ENCODE measurements at regions of chr1 and their contacts with region 1.

Region 1: DNA sequence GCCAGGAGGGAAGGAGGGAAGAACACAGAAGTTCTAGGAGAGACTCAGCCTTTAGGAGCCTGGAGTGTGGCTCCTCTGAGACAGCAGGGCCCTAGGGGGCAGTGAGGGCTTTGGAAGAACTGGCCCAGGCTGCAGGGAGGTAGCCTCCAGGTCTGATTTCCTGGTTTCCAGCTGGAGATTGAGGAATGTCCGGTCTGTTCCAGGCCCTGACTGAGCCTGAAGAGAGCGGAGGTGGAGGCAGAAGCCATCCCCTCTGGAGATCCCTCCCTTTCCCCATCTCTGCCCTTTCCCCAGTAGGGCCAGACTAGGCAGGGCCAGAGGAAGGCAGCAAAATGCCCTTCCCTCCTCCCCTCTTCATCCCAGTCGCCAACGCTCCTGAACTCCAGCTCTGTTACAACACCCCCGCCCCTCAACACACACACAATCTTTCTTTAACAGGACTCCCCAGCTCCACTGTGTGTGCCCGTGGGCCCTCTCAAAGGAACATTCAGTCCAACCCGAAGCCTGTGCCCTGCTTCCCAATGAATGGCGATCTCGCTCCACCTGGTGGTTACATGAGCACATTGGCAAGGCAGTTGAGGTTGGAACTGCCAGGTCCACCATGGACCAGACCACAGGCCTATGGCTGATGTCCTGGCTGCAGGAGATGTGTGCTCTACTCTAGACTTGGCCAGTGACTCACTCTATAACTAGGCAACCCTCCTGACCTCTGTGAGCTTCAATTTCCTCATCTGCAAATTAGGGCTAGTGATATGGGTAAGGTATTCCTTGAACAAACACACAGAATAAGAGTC is 32.0 kb downstream of the MAP7D1 start:
- DNase-seq: peak; percentile 84
- CTCF ChIP-seq: peak; percentile 94

Region 2: DNA sequence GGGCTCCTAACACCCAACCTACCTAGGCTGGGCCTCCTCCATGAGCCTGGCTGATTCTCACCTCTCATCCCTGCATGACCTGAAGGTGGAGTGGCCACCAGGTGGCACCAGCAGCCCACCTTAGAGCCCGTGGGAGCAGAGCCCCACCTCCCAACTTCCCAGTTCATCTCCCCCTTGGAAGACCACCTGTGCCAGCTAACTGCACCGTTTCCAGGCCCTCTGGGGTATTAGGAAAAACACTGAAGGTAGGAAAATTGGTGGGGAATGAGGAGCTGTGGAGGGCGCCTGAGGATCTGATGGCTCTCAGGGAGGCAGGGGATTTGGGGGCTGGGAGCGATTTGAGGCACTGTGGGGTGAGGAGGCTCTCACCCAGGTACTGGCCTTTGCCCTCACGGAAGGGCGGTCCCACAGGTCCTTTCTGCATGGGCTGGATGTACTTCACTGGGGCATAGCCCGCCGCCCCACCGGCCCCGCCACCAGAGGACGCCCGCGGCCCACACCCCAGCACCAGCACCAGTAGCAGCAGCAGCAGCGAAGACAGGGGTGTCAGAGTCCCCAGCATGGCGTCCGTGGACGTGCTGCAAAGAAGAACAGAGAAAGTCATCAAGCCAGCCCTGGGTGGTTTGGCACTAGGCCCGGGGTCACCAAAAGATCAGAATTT is 88.2 kb before region 1 on chr1:
- CTCF ChIA-PET with region 1: interaction called, 53 read pairs
- POLR2A ChIA-PET with region 1: no interaction called
- DNase-seq: peak; percentile 89
- CTCF ChIP-seq: peak; percentile 88

Region 3: DNA sequence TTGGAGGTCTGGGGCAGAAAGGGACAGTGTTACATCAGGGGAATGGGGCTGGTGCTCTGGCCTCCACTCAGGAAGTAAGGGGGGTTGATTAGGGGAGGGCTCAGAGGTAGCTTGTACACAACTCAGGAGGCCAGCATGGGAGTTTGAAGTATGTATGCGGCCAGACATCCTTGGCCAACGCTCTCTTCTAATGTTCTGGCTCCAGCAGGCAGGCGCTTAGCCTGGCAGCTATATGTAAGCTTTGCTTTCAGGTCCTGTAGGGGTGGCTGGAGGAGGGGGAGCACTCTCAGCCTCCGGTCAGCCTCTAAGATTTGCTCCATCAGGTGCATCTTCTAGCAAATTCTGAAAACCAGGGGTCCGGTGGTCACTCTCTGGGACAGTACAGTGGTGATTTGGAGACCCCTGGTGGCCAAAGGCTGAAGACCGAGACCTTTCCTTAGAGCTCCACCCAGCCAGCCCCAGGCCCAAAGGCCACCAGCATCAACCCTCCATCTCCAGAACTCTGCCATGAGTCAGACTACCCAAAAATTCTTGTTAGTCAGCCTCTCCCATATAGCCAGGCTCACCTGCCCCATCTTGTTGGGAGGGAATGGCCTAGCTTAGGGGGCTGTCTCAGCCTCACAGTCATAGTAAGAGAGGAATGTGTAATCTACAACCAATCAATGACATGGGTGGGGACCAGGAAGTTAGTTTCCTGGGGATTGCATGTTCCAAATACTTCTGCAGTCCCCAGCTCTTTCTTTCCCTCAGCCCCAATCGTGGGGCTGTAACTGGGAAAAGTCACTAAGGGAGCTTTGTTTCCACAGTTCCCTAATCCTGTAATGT is 53.3 kb before region 1 on chr1:
- CTCF ChIA-PET with region 1: interaction called, 27 read pairs
- POLR2A ChIA-PET with region 1: no interaction called
- DNase-seq: peak; percentile 79
- CTCF ChIP-seq: peak; percentile 54

Region 4: DNA sequence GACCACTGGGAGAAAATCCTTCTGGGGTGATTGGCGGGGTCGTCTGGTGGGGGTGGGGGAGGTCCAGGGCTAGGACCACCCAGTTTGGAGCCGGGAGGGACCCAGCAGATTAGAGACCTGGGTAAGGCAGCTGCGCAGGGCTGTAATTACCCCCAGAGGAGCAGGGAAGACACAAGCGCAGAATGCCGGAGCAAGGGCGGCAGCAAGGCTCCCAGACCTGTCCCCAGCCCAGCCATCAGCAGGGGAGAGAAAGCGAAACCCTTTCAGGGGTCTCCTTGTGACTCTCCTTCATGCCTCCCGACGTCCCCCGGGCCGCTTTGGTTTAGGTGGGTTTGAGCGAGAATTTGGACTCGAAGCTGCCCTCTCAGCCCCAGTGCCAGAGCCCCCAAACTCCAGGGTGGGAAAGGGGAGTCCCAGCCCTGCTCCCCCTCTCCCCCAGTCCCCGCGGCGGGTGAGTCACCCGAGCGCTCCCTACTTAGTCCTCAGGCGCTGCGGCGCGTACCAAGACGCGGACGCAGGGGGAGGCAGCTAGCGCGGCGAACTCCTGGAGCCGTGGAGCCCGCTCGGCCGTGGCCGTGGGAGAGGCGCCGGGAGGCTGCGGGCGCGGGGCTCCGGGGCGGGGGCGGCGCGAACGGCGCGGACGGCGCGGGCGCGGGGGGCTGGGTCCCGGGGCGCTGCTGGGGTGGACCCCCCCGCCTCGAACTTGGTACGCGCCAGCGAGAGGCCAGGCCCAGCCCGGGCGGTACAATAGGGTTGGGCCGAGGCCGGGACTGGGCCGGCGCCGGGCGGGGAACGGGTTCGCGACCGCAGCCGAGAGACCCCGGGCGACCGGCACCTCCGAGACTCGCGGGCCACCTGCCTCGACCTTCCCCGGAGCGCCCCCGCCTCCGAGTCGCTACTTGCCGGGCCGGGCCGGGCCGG is 32.3 kb before region 1 on chr1 and contains the start of gene MAP7D1:
- CTCF ChIA-PET with region 1: interaction called, 123 read pairs
- POLR2A ChIA-PET with region 1: interaction called, 5 read pairs
- DNase-seq: peak; percentile 87
- CTCF ChIP-seq: no peak

Region 5: DNA sequence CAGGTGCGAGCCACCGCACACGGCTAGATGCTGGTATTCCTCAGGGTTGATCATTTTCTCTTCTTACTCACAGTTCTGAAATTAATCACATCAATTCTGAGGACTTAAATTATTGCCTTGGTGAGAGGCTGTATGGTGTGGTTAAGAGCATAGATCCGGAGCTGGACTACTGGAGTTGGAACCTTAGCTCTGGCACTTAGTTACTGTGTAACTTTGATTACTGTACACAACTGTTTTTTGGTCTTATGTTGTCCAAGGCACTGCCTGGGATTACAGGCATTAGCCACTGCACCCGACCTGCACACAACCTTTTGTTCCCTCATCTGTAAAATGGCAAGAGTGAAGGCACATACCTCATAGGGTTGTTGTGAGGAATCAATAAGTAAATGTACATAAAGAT is 10.6 kb after region 1 on chr1:
- CTCF ChIA-PET with region 1: interaction called, 17 read pairs
- POLR2A ChIA-PET with region 1: no interaction called
- DNase-seq: no peak
- CTCF ChIP-seq: no peak

Region 6: DNA sequence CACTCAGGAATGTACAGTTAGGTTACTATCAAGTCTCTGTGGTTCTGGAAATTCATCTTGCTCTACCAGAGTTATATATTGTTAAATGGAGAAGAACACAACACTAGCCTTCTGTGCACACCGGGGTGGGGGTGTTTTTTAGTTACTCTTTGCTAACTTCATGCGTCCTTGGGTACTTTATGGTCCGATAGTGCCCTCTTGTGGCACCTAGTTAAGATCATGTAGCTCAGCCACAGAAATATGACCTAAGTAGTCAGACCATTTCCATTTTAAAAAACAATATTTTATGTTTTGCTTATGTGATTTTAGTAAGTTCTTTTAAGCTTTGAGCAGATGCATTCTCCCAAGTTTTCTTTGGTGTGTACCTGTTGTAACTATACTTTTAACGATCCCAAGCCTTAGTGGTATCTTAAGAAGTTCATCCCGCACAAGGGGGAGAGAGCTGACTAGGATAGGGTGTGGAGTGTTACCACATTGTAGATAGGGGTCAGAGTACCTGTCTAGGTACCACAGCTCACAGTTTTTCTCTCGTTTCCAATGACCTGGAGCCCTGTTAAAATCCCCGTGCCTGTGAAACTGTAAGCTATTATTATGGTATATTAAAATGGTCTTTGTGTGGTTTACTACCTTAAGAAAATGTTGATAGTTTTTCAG is 97.6 kb after region 1 on chr1:
- CTCF ChIA-PET with region 1: interaction called, 20 read pairs
- POLR2A ChIA-PET with region 1: no interaction called
- DNase-seq: peak; percentile 71
- CTCF ChIP-seq: peak; percentile 43

Region 7: DNA sequence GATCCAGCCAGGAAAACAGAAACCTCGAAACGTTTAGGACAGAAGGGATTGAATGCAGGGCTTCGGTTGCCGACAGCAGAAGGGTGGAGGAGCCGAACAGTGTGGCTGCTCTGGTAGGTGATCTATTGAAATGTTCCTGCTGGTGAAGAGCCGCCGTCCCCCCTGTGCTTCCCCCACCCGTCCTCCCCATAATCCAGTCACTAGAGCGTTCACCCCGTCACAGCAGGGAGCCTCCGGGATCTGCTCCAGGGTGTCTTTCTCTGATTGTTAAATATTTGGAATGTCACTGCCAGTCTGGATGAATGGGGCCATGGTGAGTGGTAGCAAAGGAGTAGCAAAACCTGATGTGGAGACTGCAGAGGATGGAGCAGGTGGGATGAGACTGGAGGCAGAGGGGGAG is 549.8 kb after region 1 on chr1:
- CTCF ChIA-PET with region 1: no interaction called
- POLR2A ChIA-PET with region 1: no interaction called
- DNase-seq: no peak
- CTCF ChIP-seq: no peak

Measured in GM10248 (cell line).